ENCODE measurements at regions of chr2 and their contacts with region 1.

Region 1: DNA sequence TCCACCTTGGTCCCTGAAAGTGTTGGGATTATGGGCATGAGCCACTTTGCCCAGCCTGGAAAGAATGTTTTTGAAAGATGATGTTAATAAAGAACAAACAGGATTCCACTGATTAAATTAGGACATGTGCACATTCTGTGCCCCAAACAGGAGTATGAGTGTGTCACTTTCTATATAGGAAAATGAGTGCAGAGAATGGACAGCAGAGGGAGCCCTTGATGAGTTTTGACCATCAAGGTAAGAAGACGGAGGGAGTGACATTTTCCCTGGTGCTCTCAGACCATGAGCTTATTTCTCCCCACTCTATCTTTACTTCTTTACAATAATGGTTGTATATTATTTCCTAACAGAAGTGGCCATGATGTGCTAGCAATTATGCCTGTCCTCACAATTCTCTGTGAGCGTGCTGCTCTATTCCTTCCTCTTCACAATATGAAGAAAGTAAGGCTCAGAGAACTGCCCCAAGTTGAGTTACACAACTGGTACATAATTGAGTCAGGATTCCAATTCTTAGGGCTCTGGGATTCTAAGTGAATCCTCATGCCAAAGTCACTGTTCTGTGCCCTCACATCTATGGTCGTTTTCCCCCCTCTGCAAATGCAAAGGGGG is 20.6 kb downstream of the RPL37A start:
- DNase-seq: peak; percentile 76
- H3K4me3 Mint-ChIP-seq: no peak overlapping the region
- H3K27ac Mint-ChIP-seq: no peak overlapping the region
- H3K4me1 Mint-ChIP-seq: no peaks in the 10 kb centered on the region
- H3K27me3 Mint-ChIP-seq: no peaks in the 10 kb centered on the region

Region 2: DNA sequence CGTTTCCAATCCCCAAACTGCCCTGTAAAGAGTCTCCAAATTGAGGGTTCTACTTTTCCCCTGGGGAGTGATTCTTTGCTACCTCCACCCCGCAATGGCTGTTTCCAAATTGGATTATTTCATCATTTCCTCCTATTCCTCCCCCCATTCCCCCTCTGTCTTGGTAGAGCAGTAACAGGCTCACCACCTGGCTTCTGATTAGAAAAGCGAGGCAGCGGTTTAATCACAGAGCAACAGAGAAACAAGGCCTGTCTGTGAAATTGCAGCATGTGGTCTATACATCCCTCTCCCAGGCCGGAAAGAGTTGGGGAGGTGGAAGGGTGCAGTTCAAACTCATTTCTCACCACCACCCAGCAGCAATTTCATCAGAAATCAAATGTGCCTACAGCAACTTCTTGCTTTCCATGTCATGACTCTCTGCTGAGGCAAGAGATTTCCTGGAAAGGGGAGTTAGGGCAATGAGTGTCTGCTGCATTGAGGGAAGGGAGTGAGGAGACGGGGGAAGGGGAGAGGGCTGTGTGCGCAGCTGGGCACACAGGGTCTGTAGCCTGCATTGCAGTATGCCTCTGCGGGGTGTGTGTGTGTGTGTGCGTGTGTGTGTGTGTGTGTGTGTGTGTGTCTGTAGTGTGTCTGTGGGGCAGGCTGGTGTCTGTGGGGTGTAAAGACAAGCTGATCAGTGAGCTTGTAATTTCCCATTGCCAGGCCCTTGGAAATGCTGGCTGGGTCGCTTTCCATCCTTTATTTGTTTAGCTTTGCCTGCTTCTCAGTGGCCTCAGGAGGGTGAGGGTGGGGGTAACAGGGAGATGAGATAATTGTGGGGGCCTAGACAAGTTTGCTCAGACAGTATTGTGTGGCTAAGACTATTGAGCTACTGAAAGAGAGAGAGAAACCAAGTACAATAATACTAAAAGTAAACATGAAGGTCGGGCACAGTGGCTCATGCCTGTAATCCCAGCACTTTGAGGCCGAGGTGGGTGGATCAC is 100.4 kb after region 1 on chr2:
- CTCF ChIA-PET with region 1: interaction called, 10 read pairs
- DNase-seq: peak; percentile 39
- H3K4me3 Mint-ChIP-seq: no peak overlapping the region
- H3K27ac Mint-ChIP-seq: peak overlapping the region; percentile 84
- H3K4me1 Mint-ChIP-seq: peaks cover 16% of the 10 kb centered on the region
- H3K27me3 Mint-ChIP-seq: peaks cover 50% of the 10 kb centered on the region

Region 3: GRCh38 chr2:216653931-216654365 is 134.7 kb after region 1 on chr2:
- CTCF ChIA-PET with region 1: interaction called, 320 read pairs
- DNase-seq: no peak
- H3K4me3 Mint-ChIP-seq: no peak overlapping the region
- H3K27ac Mint-ChIP-seq: no peak overlapping the region
- H3K4me1 Mint-ChIP-seq: peaks cover 5% of the 10 kb centered on the region
- H3K27me3 Mint-ChIP-seq: peaks cover 35% of the 10 kb centered on the region